ENCODE measurements at regions of chrX and their contacts with region 1.

Region 1: GRCh38 chrX:30504309-30504708 is 73.3 kb downstream of the TASL start:
- DNase-seq: no peak
- ATAC-seq: no peak
- H3K4me3 ChIP-seq: no peak overlapping the region
- H3K27ac ChIP-seq: no peak overlapping the region
- H3K4me1 ChIP-seq: no peaks in the 10 kb centered on the region
- H3K27me3 ChIP-seq: peaks cover 0 to 21% (median 0%) of the 10 kb centered on the region in 9 donors
- CTCF ChIP-seq: peak in 11 of 12 donors; percentile 17 to 50 (median 42)
- POLR2A ChIP-seq: no peak

Region 2: DNA sequence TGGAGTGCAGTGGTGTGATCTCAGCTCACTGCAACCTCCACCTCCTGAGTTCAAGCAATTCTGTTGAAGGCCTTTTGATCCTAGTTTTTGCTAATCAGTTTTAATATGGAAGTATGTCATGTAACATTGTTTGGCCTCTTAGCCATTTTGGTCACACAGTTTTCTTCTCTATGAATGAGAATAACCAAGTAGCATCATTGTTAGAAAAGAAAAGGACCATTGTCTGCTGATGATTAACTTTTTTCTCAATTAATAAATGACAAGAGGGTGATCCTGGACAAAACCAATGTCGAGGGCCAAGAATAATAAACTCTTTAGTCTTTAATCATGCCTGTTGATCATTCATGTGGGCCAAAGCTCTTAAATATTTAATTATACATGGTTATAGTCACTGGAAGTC is 578.3 kb before region 1 on chrX:
- intact Hi-C with region 1: no loop called
- DNase-seq: no peak
- ATAC-seq: no peak
- H3K4me3 ChIP-seq: no peak overlapping the region
- H3K27ac ChIP-seq: no peak overlapping the region
- H3K4me1 ChIP-seq: peaks cover 0 to 3% (median 0%) of the 10 kb centered on the region in 12 donors
- H3K27me3 ChIP-seq: no peaks in the 10 kb centered on the region
- CTCF ChIP-seq: no peak
- POLR2A ChIP-seq: no peak

Region 3: GRCh38 chrX:30141966-30142365 is 362.3 kb before region 1 on chrX:
- intact Hi-C with region 1: loop called in 7 of 10 experiments (anchors 5 to 10 kb)
- DNase-seq: no peak
- ATAC-seq: peak in 1 of 4 donors; percentile 39
- H3K4me3 ChIP-seq: no peak overlapping the region
- H3K27ac ChIP-seq: no peak overlapping the region
- H3K4me1 ChIP-seq: no peaks in the 10 kb centered on the region
- H3K27me3 ChIP-seq: no peaks in the 10 kb centered on the region
- CTCF ChIP-seq: peak in 4 of 12 donors; percentile 9 to 28 (median 24)
- POLR2A ChIP-seq: no peak

Region 4: DNA sequence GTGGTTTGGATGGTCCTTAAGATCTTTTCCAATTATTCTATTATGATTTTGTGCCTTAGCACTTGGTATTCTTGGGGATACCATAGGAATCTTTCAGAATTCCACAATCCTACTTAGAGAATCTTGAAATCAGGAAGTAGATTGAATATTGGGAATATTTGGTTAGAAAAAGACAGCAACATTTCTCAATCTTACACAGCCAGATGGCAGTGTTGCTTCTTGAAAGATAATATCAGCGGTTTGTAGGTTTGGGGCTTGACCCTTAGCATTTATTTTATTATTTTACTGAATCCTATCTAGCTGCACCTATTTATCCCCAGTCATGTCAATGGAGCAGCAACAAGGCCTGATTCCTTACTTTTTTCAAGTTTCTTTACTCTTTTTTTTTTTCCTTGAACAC is 228.8 kb before region 1 on chrX:
- intact Hi-C with region 1: loop called in 6 of 10 experiments (anchors 5 to 10 kb)
- DNase-seq: no peak
- ATAC-seq: no peak
- H3K4me3 ChIP-seq: no peak overlapping the region
- H3K27ac ChIP-seq: no peak overlapping the region
- H3K4me1 ChIP-seq: no peaks in the 10 kb centered on the region
- H3K27me3 ChIP-seq: peaks cover 0 to 7% (median 0%) of the 10 kb centered on the region in 9 donors
- CTCF ChIP-seq: peak in 5 of 12 donors; percentile 9 to 25 (median 14)
- POLR2A ChIP-seq: no peak

Region 5: GRCh38 chrX:30530606-30531005 is 26.3 kb after region 1 on chrX:
- intact Hi-C with region 1: no loop called
- DNase-seq: no peak
- ATAC-seq: no peak
- H3K4me3 ChIP-seq: no peak overlapping the region
- H3K27ac ChIP-seq: no peak overlapping the region
- H3K4me1 ChIP-seq: no peaks in the 10 kb centered on the region
- H3K27me3 ChIP-seq: peaks cover 0 to 5% (median 0%) of the 10 kb centered on the region in 9 donors
- CTCF ChIP-seq: no peak
- POLR2A ChIP-seq: no peak

Region 6: GRCh38 chrX:30735839-30736238 is 231.5 kb after region 1 on chrX:
- intact Hi-C with region 1: no loop called
- DNase-seq: peak in 2 of 5 donors; percentile 6 to 22
- ATAC-seq: no peak
- H3K4me3 ChIP-seq: no peak overlapping the region
- H3K27ac ChIP-seq: no peak overlapping the region
- H3K4me1 ChIP-seq: peaks cover 0 to 3% (median 0%) of the 10 kb centered on the region in 12 donors
- H3K27me3 ChIP-seq: peaks cover 0 to 3% (median 0%) of the 10 kb centered on the region in 9 donors
- CTCF ChIP-seq: peak in 11 of 12 donors; percentile 30 to 65 (median 48)
- POLR2A ChIP-seq: no peak

Measured in heart left ventricle (tissue), 16 donors.